WTC11 (cell line): ENCODE measurements at regions of chr21 and their contacts with region 1.

Region 1: DNA sequence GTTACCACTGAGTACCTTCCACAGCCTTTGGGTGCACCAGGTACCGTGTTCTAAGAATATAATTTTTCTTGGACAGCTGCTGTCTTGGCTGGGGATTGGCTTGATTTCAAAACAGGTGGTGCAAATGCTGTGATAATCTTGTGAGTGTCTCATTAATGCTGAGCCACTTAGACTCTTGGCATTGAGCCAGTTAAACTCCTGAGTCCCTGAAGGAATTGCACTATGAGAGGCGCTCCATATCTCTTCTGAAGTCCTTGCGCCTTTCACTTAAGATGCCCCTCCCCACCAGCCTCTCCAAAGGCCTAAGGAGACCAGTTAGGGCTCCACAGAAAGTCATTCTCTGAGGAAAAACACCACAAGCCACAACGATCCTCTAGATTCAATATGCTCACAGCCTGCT is 51.0 kb downstream of the BACH1 start:
- DNase-seq: no peak
- ATAC-seq: no peak
- H3K4me3 Mint-ChIP-seq: no peak overlapping the region
- H3K27ac Mint-ChIP-seq: no peak overlapping the region
- H3K4me1 Mint-ChIP-seq: no peaks in the 10 kb centered on the region
- H3K27me3 Mint-ChIP-seq: no peaks in the 10 kb centered on the region
- CTCF ChIP-seq: no peak

Region 2: DNA sequence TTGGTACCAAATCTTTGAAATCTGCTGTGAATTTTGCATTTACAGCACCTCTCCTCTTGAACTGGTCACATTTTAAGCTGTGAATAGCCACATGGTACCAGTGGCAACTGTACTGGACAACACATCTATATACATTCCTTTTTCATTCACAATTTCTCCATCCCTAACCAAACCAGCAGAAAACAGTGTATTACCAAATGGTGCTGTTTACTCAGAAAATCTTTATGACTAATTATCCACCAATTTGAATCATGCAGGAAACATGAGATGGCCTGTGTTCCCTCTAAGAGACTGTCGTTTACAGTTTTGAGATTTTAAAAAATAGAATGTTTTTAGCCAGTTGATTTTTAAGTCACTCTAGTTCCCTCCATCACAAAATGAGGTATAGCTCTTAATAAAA is 258.7 kb before region 1 on chr21:
- CTCF ChIA-PET with region 1: interaction called, 13 read pairs
- POLR2A ChIA-PET with region 1: no interaction called
- DNase-seq: no peak
- ATAC-seq: no peak
- H3K4me3 Mint-ChIP-seq: no peak overlapping the region
- H3K27ac Mint-ChIP-seq: no peak overlapping the region
- H3K4me1 Mint-ChIP-seq: peaks cover 6% of the 10 kb centered on the region
- H3K27me3 Mint-ChIP-seq: peaks cover 12% of the 10 kb centered on the region
- CTCF ChIP-seq: no peak

Region 3: DNA sequence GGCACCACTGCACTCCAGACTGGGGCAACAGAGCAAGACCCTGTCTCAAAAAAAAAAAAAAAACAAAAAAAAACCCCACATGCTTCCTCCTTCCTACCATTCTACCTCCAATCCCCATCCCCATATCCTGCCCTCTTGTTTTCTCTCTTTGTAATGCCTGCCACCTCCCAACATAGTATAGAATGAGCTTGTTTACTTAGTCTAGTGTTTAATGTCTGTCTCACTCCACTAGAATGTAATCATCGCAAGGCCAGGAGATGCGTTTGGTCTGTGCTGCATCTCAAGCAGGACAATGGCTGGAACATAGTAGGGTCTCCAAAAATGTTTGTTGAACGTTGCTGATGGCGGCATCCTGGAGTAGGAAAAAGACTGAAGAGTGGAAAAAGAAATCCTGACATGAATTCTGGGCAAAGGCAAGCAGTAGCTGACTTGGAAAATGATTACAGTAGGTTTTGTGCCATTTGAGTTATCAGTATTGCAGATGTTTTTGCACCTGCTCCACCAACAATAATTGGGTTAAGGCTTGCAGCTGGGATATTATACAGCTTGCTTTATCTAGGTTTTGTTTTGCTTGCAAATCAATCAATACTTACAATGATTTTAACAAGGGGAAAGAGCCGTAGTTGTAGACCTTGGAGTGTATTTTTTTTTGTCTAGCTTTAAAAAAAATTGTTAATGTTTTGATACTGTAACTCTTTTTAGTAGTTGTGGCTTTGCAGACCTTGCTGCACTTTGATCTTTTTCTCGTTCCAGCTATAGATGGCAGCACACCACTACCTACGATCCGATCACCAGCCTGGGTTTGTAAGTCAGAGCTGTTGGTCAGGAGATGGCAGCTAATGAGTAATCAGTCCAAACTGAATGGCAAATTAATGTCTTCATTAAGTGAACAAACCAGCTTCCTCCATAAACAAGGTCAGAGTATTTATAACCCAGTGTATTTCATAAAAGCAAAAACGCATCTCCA is 11.4 kb after region 1 on chr21:
- CTCF ChIA-PET with region 1: interaction called, 11 read pairs
- POLR2A ChIA-PET with region 1: no interaction called
- DNase-seq: no peak
- ATAC-seq: peak; percentile 44; the same call in 1 of the 2 replicates
- H3K4me3 Mint-ChIP-seq: no peak overlapping the region
- H3K27ac Mint-ChIP-seq: no peak overlapping the region; the same call in 1 of the 2 replicates
- H3K4me1 Mint-ChIP-seq: no peaks in the 10 kb centered on the region; the same call in 1 of the 2 replicates
- H3K27me3 Mint-ChIP-seq: no peaks in the 10 kb centered on the region
- CTCF ChIP-seq: no peak